Heart right ventricle (tissue), 16 donors: ENCODE measurements at regions of chr2 and their contacts with region 1.

Region 1: GRCh38 chr2:26144953-26145680 is 27.8 kb upstream of the GAREM2 start:
- DNase-seq: peak; percentile 40 to 43
- ATAC-seq: peak in 7 of 8 donors; percentile 65 to 79 (median 69)
- H3K4me3 ChIP-seq: no peak overlapping the region
- H3K27ac ChIP-seq: no peak overlapping the region
- H3K4me1 ChIP-seq: peaks cover 0 to 9% (median 0%) of the 10 kb centered on the region in 9 donors
- H3K27me3 ChIP-seq: peaks cover 0 to 10% (median 0%) of the 10 kb centered on the region in 7 donors
- CTCF ChIP-seq: peak; percentile 48 to 84 (median 75)

Region 2: GRCh38 chr2:25851740-25852503 is 293.2 kb before region 1 on chr2:
- intact Hi-C with region 1: loop called in 3 of 10 experiments (anchors 5 to 10 kb)
- DNase-seq: peak in 1 of 2 donors; percentile 34
- ATAC-seq: peak in 7 of 8 donors; percentile 81 to 92 (median 87)
- H3K4me3 ChIP-seq: peak overlapping the region in 1 of 10 donors; percentile 3
- H3K27ac ChIP-seq: peak overlapping the region in 1 of 10 donors; percentile 60
- H3K4me1 ChIP-seq: peaks cover 0 to 45% (median 13%) of the 10 kb centered on the region in 9 donors
- H3K27me3 ChIP-seq: no peaks in the 10 kb centered on the region
- CTCF ChIP-seq: peak; percentile 43 to 84 (median 71)

Region 3: DNA sequence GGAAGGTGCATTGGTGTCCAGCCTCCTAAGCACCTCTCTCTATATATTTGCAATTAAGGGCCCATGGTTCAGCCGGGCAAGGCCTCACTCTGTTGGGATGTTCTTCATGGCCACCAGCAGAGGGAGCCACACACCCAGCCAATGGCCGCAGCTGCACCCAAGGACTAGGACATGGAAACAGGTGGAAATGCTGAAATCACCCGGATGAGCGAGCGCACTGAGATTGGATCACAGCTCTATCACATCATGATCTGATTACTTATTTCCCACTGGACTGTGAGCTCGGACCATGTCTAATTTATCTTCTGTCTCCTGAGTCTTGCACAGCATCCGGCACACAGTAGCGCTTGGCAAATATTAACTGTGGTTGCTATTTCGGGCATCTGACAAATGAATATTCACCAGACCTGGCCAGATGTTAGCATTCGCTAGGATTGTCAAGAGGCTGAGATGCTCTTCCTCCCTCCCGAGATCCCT is 194.0 kb before region 1 on chr2:
- intact Hi-C with region 1: loop called (anchors 1 to 10 kb)
- DNase-seq: peak; percentile 75 to 77
- ATAC-seq: peak; percentile 90 to 97 (median 94)
- H3K4me3 ChIP-seq: peak overlapping the region in 4 of 10 donors; percentile 3 to 27 (median 14)
- H3K27ac ChIP-seq: no peak overlapping the region
- H3K4me1 ChIP-seq: peaks cover 0 to 18% (median 7%) of the 10 kb centered on the region in 9 donors
- H3K27me3 ChIP-seq: no peaks in the 10 kb centered on the region
- CTCF ChIP-seq: peak; percentile 76 to 98 (median 95)

Region 4: GRCh38 chr2:25991965-25992364 is 153.2 kb before region 1 on chr2:
- intact Hi-C with region 1: loop called (anchors 1 to 10 kb)
- DNase-seq: no peak
- ATAC-seq: peak in 3 of 8 donors; percentile 11 to 39 (median 22)
- H3K4me3 ChIP-seq: peak overlapping the region in 1 of 10 donors; percentile 43
- H3K27ac ChIP-seq: no peak overlapping the region
- H3K4me1 ChIP-seq: peaks cover 0 to 14% (median 0%) of the 10 kb centered on the region in 9 donors
- H3K27me3 ChIP-seq: no peaks in the 10 kb centered on the region
- CTCF ChIP-seq: no peak

Region 5: DNA sequence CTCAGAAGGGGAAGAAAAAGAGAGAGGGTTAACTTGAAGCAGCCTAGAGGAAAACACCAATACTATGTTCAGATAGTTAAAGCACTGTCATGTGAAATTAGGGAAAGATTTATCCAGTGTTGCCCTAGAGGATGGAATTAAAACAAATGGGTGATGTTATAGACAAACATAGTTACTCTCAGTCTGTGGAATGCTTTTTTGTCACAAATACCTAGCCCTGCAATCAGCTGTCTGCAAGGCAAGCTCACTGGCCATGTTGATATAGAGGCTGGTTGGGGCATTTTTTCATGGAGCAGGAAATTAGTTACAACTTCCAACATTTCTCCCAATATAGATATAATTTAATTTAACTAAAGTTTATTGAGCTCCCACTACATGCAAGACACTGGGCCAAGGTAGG is 119.6 kb before region 1 on chr2:
- intact Hi-C with region 1: loop called in 1 of 10 experiments (anchors 1 kb)
- DNase-seq: no peak
- ATAC-seq: no peak
- H3K4me3 ChIP-seq: no peak overlapping the region
- H3K27ac ChIP-seq: no peak overlapping the region
- H3K4me1 ChIP-seq: peaks cover 0 to 10% (median 0%) of the 10 kb centered on the region in 9 donors
- H3K27me3 ChIP-seq: no peaks in the 10 kb centered on the region
- CTCF ChIP-seq: no peak

Region 6: DNA sequence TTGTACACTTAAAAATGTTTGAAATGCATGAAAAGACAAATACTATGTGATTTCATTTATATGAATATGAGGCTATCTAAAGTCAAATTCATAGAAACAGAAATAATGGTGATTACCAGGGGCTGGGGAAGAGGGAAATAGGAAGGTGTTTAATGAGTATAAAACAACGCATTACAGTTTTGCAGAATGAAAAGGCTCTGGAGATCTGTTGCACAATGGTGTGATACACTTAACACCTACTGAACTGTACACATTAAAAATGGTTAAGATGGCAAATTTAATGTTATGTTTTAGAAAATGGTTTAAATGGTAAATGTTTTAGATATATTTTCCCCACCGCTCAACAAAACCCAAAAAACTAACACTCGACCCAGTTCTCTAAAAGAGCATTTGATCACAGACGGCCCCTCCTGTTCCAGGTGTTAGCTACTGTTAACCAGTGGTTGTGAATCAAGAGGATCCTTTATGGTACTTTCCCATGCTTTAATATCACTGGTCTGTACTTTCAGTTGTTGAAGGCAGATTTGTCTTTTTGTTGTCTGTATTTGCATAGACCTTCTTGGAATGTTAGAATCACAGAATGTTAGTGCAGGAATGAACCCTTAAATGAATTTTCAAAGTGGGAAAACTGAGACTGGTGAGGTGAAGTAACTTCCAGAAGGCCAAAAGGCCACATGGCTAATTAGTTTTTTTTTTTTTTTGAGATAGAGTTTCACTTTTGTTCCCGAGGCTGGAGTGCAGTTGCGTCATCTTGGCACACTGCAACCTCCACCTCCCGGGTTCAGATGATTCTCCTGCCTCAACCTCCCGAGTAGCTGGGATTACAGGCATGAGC is 101.0 kb before region 1 on chr2:
- intact Hi-C with region 1: no loop called
- DNase-seq: peak in 1 of 2 donors; percentile 24
- ATAC-seq: peak in 5 of 8 donors; percentile 16 to 70 (median 37)
- H3K4me3 ChIP-seq: peak overlapping the region in 1 of 10 donors; percentile 22
- H3K27ac ChIP-seq: peak overlapping the region in 3 of 10 donors; percentile 1 to 31 (median 18)
- H3K4me1 ChIP-seq: peaks cover 2 to 64% (median 35%) of the 10 kb centered on the region in 9 donors
- H3K27me3 ChIP-seq: no peaks in the 10 kb centered on the region
- CTCF ChIP-seq: no peak

Region 7: DNA sequence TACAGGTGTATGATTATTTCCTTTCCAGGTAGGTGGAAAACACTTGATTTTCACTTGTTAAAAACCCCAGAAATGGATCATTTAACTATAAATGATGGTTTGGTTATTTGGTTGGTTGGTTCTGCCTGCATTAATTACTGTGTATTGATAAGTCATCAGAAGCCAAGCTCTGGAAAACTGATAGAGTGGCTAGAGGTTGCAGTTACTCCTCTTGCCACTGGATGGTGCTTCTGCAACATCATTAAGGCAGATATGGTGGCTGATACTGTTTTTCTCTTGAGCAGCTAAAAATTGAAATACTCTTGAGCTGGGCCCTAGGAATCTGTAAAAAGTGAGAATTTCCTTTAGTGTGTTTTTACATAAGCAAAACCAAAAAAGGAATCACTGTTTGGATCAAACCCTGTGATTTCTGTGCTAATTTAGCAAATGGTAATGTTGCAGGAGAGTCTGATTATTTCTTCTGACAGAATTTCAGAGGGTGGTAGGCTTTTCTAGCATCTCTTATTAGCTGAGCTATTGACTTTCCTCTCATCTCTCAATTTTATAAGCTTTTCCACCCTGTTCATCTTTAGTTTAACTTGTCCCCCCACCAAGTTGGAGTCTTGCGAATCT is 57.0 kb before region 1 on chr2:
- intact Hi-C with region 1: loop called in 9 of 10 experiments (anchors 1 to 10 kb)
- DNase-seq: no peak
- ATAC-seq: peak in 3 of 8 donors; percentile 49 to 60 (median 54)
- H3K4me3 ChIP-seq: no peak overlapping the region
- H3K27ac ChIP-seq: no peak overlapping the region
- H3K4me1 ChIP-seq: peaks cover 0 to 65% (median 16%) of the 10 kb centered on the region in 9 donors
- H3K27me3 ChIP-seq: no peaks in the 10 kb centered on the region
- CTCF ChIP-seq: peak; percentile 28 to 78 (median 70)

Region 8: GRCh38 chr2:26099933-26100332 is 45.2 kb before region 1 on chr2:
- intact Hi-C with region 1: loop called in 1 of 10 experiments (anchors 5 kb)
- DNase-seq: no peak
- ATAC-seq: peak; percentile 45 to 88 (median 66)
- H3K4me3 ChIP-seq: no peak overlapping the region
- H3K27ac ChIP-seq: peak overlapping the region in 7 of 10 donors; percentile 8 to 68 (median 54)
- H3K4me1 ChIP-seq: peaks cover 0 to 41% (median 29%) of the 10 kb centered on the region in 9 donors
- H3K27me3 ChIP-seq: no peaks in the 10 kb centered on the region
- CTCF ChIP-seq: no peak